GM18951 (cell line): ENCODE measurements at regions of chr6 and their contacts with region 1.

Region 1: DNA sequence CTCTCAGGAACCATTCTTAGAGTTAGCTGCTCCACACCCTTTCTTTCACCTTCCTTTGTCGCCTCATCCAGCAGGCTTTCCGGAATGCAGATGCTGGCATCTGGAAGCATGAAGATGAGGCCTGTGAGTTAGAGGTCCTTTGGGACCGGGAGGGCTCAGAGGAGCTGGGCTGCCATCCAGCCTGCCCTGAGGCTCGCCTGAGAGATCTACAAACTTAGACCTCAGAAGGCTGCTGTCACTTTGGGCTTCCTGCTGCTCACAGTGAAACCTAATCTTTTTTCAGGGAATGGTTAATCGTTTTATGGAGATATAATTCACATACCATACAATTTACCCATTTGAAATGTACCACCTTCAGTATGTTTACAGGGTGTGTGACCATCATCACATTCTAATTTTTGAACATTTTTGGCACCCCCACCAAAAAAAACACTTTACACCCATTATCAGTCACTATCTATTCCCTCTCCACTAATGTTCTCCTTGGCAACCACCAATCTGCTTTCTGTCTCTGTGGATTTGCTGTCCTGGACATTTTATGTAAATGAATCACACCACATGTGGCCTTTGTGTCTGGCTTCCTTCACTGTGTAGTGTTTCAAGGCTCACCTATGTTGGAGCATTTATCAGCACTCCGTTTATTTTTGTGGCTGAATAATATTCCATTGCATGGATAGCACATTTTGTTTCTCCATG is 20.0 kb upstream of the MPC1 start:
- POLR2A ChIP-seq: no peak

Region 2: DNA sequence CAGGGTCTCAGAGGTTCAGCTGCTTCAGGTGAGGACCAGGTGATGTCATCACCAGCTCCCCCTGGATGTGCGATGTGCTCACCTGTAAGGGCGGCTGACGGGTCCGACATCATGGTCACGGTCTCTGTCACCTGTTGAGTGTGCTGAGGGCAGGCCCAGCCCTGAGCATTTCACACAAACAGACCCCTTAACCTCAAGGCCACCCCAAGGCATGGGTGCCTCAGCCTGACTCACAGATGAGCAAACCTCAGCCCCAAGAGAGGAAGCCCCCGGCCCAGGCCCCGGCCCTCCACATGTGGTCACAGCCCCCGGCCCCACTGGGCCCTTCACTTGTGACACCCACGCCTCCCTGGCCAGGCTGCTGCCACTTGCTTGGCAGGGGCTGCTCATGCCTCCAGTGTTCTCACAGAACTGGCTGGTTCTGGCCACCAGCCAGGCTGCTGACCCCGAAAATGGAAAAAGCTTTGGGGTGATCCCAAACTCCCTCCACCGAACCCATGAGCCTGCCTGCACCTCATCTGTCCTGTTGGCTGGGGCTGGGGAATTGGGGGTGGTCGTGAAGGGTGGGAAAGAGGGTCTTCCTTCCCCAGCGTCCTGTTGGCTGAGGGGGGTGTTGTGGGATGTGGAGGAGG is 127.9 kb before region 1 on chr6:
- in situ Hi-C with region 1: loop called (anchors 5 kb)
- POLR2A ChIP-seq: no peak